Right ventricle myocardium inferior (tissue), 1 donor: ENCODE measurements at regions of chr12 and their contacts with region 1.

Region 1: DNA sequence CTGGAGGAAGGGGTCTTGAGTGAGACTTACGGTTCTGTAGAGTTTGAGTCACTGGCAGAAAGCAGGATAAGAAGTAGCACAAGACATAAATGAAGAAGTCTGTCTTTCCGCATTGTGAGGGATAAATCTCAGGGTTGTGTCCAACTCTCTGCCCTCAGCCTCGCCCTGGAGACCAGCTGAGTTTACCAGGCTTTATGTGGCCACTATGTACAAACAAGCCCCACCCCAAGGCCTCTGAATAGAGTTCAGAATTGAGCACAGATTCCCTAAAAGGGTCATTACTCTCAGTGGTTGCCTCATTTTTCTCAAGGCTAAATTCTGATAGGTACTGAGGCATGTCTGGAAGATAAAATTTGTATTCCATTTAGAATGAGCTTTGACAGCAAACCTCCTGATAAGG is at the start of gene PZP:
- DNase-seq: no peak
- ATAC-seq: no peak
- total RNA-seq, gene PZP: 0.30 TPM

Region 2: GRCh38 chr12:9148926-9149325 is 59.3 kb before region 1 on chr12:
- intact Hi-C with region 1: no loop called
- DNase-seq: no peak
- ATAC-seq: no peak

Region 3: GRCh38 chr12:9169979-9170634 is 38.1 kb before region 1 on chr12:
- intact Hi-C with region 1: loop called (anchors 5 kb)
- DNase-seq: peak; percentile 51
- ATAC-seq: no peak